HepG2 (cell line): ENCODE measurements at regions of chr2 and their contacts with region 1.

Region 1: GRCh38 chr2:163471947-163472346 is 263.9 kb downstream of the FIGN start:
- DNase-seq: peak; percentile 3
- ATAC-seq: peak; percentile 50
- H3K4me3 ChIP-seq: no peak overlapping the region
- H3K27ac ChIP-seq: no peak overlapping the region
- H3K4me1 ChIP-seq: peaks cover 16% of the 10 kb centered on the region; the same call in 1 of the 2 replicates
- H3K27me3 ChIP-seq: no peaks in the 10 kb centered on the region
- CTCF ChIP-seq: peak; percentile 59
- EP300 ChIP-seq: no peak
- POLR2A ChIP-seq: no peak
- RAD21 ChIP-seq: 0 out of 2 replicates have a peak, but pooled peaks have one; percentile 11

Region 2: DNA sequence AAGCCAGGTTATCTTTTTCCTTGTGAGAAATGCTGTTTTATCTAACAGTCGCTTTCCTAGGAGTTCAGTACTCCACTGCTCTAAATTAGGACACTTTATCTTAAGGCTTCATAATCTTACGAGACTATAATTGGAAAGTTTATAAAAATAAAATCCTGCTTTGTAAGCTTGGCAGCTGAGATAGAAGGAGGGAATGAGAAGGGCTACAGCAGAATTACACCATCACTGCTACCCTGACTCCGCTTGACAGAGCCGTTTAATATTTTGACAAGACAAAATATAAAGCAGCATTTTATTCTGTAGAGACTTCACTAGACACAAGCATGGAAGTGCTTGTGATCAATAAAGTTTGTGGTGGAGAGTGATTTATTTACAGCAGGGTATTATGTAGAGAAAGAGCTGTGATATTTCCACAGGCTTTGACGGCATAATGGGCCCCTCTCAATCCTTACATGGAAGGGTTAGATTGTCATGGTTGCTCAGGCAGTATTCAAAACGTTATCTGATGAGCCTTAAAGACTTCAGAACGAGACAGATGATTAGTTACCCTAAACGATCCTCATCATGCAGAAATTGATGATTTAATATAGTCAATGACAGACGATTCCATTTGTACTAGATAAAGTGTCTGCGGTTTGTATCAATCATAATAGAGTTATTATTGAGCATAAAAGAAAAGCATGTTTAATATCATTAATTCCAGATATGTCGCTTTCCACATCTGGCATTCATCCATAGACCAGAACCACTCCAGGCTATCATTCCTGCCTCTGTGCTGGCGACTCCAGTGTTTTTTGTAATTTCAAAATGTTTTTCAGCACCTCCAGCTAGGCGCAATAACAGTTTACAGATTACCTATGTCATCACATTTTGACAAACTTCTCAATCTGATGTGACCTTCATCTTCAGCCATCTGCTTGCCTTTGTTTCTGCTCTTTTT is 21.7 kb after region 1 on chr2:
- CTCF ChIA-PET with region 1: no interaction called
- POLR2A ChIA-PET with region 1: no interaction called
- in situ Hi-C with region 1: no loop called
- intact Hi-C with region 1: no loop called
- DNase-seq: no peak
- ATAC-seq: no peak
- H3K4me3 ChIP-seq: no peak overlapping the region
- H3K27ac ChIP-seq: no peak overlapping the region
- H3K4me1 ChIP-seq: no peaks in the 10 kb centered on the region
- H3K27me3 ChIP-seq: 0 out of 5 replicates have a peak, but pooled peaks cover 0 to 4% of the 10 kb centered on the region in 2 experiments
- CTCF ChIP-seq: no peak
- EP300 ChIP-seq: no peak
- POLR2A ChIP-seq: no peak
- RAD21 ChIP-seq: no peak

Region 3: DNA sequence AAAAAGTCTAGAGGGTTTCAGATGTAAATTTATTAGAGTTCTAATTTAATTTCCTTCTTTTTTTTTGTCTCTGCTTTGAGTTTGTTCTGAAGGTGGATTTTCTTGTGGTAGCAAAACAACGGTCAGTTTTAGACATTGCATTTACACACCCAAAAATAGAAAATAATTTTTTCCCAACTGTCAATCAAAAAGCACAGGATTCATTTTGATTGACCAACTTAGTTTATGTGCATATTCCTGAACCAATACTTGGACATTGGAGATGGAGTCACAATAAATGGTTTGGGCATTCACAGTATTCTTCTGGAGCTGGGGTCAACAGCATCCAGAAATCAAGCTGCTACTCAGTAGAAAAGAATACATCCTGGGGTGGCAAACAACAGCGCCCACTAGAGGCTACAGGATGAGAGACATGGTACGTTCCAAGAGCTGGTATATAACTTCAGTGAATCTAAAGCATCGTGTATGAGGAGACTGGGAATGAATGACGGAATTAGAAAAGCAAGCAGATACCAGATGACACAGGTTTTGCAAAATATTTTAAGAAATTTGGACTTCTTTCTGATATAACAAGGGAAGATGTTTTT is 406.7 kb after region 1 on chr2:
- CTCF ChIA-PET with region 1: interaction called, 3 read pairs
- POLR2A ChIA-PET with region 1: no interaction called
- in situ Hi-C with region 1: no loop called
- intact Hi-C with region 1: loop called (anchors 1 kb)
- DNase-seq: peak; percentile 59
- ATAC-seq: peak; percentile 94
- H3K4me3 ChIP-seq: no peak overlapping the region
- H3K27ac ChIP-seq: no peak overlapping the region
- H3K4me1 ChIP-seq: no peaks in the 10 kb centered on the region
- H3K27me3 ChIP-seq: no peaks in the 10 kb centered on the region
- CTCF ChIP-seq: peak; percentile 77
- EP300 ChIP-seq: no peak
- POLR2A ChIP-seq: no peak
- RAD21 ChIP-seq: peak; percentile 58